ENCODE measurements at regions of chr15 and their contacts with region 1.

Region 1: DNA sequence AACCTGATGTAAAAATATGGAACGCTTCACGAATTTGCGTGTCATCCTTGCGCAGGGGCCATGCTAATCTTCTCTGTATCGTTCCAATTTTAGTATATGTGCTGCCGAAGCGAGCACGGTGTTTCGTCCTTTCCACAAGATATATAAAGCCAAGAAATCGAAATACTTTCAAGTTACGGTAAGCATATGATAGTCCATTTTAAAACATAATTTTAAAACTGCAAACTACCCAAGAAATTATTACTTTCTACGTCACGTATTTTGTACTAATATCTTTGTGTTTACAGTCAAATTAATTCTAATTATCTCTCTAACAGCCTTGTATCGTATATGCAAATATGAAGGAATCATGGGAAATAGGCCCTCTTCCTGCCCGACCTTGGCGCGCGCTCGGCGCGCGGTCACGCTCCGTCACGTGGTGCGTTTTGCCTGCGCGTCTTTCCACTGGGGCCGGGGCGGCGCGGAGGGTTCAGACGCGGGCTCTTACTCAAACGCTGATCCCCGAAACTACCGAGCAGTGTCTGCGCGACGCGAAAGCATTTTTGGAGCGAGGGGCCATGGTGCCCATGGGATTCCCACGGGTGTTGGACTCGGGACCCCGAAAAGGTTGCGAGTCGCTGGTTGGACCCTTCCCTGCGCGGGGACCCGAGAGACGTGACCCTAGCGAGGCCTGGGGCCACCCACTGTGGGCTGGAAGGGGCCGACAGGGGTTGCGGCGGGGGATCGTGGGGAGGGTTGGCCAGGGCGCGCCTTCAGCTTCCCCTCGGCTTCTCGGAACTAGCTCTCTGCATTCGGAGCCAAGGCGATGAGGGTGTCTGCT is at the start of gene RNU6-1:
- DNase-seq: peak; percentile 84
- H3K4me3 ChIP-seq: peak within 1 kb of the TSS; percentile 68 to 84 (median 74)
- H3K27ac ChIP-seq: peak within 1 kb of the TSS; percentile 93
- H3K4me1 ChIP-seq: peaks cover 26% of the 10 kb centered on the region
- H3K27me3 ChIP-seq: peaks cover 9% of the 10 kb centered on the region
- CTCF ChIP-seq: no peak
- total RNA-seq, gene RNU6-1: not detected

Region 2: DNA sequence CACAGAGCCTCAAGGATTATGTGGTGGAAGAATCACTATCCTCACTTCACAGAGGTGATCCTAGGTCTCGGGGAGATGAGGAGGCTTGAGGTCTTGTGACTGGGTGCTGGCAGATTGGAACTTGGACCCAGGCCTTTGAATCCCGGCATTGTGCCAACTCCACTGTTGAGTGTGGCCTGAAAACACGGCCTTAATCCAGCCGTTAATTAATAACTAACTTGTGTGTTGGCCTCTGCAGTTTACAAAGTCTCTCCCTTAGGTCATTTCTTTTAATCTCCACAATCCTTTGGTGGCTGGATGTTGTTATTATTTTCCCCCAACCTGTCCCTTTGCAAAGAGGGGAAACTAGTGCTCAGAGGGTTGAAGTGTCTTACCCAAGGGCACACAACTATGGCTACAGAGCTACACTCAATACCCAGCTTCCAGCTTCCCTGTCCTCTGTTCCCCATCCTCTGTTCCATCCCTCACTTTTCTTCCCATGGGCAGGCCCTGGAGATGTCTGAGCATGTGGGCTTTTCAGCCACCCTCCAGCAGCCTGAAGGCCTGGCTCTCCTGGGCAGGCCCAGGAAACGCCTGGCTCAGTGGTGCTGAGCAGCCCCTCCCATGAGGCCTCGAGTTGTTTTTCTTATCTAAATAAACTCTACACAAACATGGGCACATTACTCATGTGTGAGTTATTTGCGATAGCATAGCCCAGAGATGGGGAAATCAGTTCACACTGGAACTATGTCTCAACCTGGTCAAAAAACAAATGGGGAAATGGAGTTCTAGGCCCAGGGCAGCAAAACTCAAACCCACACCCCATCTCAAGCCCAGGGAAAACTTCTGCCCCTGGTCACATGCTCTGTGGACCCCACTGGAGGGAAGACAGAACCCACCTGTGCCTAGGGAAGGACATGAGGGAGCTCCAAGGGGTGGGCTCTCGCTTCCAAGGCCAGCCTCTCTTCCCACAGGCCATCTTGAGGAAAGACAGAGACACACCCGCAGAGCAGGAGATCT is 791.6 kb before region 1 on chr15:
- CTCF ChIA-PET with region 1: no interaction called
- dilution Hi-C with region 1: no loop called
- in situ Hi-C with region 1: no loop called
- intact Hi-C with region 1: loop called (anchors 5 kb)
- DNase-seq: peak; percentile 86
- H3K4me3 ChIP-seq: no peak overlapping the region
- H3K27ac ChIP-seq: peak overlapping the region; percentile 89
- H3K4me1 ChIP-seq: peaks cover 44% of the 10 kb centered on the region
- H3K27me3 ChIP-seq: no peaks in the 10 kb centered on the region
- CTCF ChIP-seq: no peak

Region 3: GRCh38 chr15:67303490-67304363 is 536.4 kb before region 1 on chr15:
- CTCF ChIA-PET with region 1: no interaction called
- dilution Hi-C with region 1: no loop called
- in situ Hi-C with region 1: no loop called
- intact Hi-C with region 1: loop called (anchors 5 kb)
- DNase-seq: peak; percentile 23
- H3K4me3 ChIP-seq: no peak overlapping the region
- H3K27ac ChIP-seq: no peak overlapping the region
- H3K4me1 ChIP-seq: no peaks in the 10 kb centered on the region
- H3K27me3 ChIP-seq: no peaks in the 10 kb centered on the region
- CTCF ChIP-seq: peak; percentile 32 to 61

Region 4: DNA sequence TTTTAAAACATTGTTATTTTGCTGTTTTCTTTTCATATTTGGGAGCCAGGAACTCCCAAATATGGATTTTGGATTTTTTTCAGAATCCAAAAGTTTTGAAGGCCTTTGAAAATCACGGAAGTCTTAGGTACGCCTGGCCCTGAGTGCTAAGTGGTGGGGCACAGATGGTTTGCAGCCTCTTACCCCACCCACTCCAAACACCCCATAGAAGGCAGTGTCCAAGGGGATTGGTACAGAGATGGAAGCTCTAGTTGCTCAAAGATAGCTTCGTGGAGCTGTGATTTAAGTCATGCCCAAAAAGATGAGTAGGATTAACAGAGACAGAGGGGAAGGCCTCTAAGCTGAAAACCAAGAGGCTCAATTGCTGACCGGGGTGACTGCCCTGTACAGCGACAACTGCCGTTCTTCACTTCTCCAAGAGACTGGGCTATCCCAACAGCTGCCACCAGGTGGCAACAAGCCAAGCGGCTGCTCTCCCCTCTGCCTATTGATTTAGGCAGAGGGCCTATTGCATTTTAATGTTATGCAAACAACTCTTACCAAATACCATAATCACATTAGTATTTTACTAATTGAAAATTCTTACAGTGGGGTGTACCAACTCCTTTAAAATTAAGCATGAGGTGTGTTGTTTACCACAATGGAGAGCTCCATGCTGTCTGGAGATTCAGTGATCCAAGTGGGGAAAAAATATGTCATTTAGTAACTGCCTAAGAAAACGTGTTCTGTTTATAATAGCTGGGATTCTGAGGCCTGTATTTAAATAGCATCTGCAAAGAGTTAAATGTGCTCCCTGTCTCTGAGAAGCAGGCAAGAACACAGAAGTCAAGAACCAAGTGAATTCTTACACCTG is 383.2 kb before region 1 on chr15:
- CTCF ChIA-PET with region 1: no interaction called
- dilution Hi-C with region 1: no loop called
- in situ Hi-C with region 1: loop called in 1 of 2 experiments (anchors 5 kb)
- intact Hi-C with region 1: loop called (anchors 1 kb)
- DNase-seq: peak; percentile 46
- H3K4me3 ChIP-seq: no peak overlapping the region
- H3K27ac ChIP-seq: no peak overlapping the region
- H3K4me1 ChIP-seq: no peaks in the 10 kb centered on the region
- H3K27me3 ChIP-seq: no peaks in the 10 kb centered on the region
- CTCF ChIP-seq: peak; percentile 89 to 93

Region 5: DNA sequence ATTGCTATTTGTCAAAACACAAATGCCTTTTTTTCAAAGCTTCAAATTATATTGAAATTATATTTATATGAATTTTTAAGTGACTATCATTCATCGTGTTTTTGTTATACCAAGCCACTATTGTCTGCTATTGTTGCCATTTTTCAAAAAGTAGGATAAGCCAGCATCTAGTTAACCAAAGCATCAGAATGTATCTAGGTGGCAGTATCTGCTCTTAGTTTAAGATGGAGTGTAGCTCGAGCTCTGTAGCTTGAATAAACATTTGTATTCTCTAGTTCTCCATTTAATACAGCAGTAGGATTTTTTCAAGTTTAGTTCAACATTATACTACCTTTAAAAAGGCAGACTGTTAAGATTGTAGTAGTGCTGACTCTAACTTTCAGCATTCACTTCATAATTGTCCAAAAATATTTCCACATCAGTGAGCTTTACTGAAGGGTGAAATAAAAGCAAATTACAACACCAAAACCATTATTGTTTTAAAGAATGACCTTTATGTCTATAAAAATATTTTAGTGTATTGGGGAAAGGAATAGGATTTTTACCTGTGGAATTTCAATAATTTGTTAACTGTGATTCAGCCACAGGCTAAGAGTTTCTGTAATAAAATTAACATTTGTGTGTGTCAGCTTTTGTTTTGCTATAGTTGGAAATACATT is 338.8 kb before region 1 on chr15:
- CTCF ChIA-PET with region 1: no interaction called
- dilution Hi-C with region 1: no loop called
- in situ Hi-C with region 1: no loop called
- intact Hi-C with region 1: loop called (anchors 1 kb)
- DNase-seq: peak; percentile 9
- H3K4me3 ChIP-seq: peak overlapping the region in 2 of 3 experiments; percentile 8 to 32
- H3K27ac ChIP-seq: no peak overlapping the region
- H3K4me1 ChIP-seq: peaks cover 10% of the 10 kb centered on the region
- H3K27me3 ChIP-seq: no peaks in the 10 kb centered on the region
- CTCF ChIP-seq: peak; percentile 13 to 54

Region 6: GRCh38 chr15:67531379-67532059 is 308.6 kb before region 1 on chr15:
- CTCF ChIA-PET with region 1: no interaction called
- dilution Hi-C with region 1: no loop called
- in situ Hi-C with region 1: loop called in 1 of 2 experiments (anchors 10 kb)
- intact Hi-C with region 1: no loop called
- DNase-seq: peak; percentile 87
- H3K4me3 ChIP-seq: no peak overlapping the region
- H3K27ac ChIP-seq: peak overlapping the region; percentile 50
- H3K4me1 ChIP-seq: peaks cover 12% of the 10 kb centered on the region
- H3K27me3 ChIP-seq: no peaks in the 10 kb centered on the region
- CTCF ChIP-seq: no peak

Region 7: GRCh38 chr15:67803996-67804843 is 35.9 kb before region 1 on chr15:
- CTCF ChIA-PET with region 1: no interaction called
- dilution Hi-C with region 1: no loop called
- in situ Hi-C with region 1: no loop called
- intact Hi-C with region 1: no loop called
- DNase-seq: no peak
- H3K4me3 ChIP-seq: no peak overlapping the region
- H3K27ac ChIP-seq: no peak overlapping the region
- H3K4me1 ChIP-seq: no peaks in the 10 kb centered on the region
- H3K27me3 ChIP-seq: no peaks in the 10 kb centered on the region
- CTCF ChIP-seq: no peak

Region 8: DNA sequence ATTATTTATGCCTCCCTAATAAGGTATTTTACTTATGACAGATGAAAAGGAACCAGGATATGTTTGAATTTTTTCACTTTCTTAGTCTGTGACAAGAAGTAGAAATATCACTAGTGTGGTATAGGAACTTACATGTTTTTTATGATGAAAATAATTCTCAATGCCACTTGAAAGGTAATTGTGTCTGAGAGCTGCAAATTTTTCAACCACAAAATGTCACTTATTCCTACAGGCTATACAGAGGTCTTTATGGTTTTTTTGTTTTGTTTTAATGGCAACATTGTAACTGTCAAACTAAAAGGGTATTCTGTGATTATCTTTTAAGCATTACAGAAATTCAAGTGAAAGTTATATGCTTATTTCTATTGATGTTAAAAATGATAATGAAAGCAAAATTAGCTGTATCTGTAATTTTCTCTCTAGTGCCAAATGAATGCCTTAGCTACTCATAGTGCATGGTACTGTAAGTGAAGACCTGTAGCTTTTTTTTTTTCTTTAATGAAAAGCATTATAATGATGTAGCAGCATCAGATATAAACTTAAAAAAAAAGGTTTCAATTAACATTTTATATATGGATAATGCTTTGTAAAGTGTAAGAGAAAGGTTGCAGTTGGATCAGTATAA is 452.1 kb after region 1 on chr15:
- CTCF ChIA-PET with region 1: interaction called, 25 read pairs
- dilution Hi-C with region 1: no loop called
- in situ Hi-C with region 1: no loop called
- intact Hi-C with region 1: no loop called
- DNase-seq: no peak
- H3K4me3 ChIP-seq: no peak overlapping the region
- H3K27ac ChIP-seq: no peak overlapping the region
- H3K4me1 ChIP-seq: peaks cover 23% of the 10 kb centered on the region
- H3K27me3 ChIP-seq: no peaks in the 10 kb centered on the region
- CTCF ChIP-seq: no peak